Activated CD8-positive, alpha-beta T cell treated with anti-CD3 and anti-CD28 coated beads, Interleukin-2, amount 10 ng/mL, durations not matched to agents 7 days and 5 days (primary cell): ENCODE measurements at regions of chr12 and their contacts with region 1.

Region 1: DNA sequence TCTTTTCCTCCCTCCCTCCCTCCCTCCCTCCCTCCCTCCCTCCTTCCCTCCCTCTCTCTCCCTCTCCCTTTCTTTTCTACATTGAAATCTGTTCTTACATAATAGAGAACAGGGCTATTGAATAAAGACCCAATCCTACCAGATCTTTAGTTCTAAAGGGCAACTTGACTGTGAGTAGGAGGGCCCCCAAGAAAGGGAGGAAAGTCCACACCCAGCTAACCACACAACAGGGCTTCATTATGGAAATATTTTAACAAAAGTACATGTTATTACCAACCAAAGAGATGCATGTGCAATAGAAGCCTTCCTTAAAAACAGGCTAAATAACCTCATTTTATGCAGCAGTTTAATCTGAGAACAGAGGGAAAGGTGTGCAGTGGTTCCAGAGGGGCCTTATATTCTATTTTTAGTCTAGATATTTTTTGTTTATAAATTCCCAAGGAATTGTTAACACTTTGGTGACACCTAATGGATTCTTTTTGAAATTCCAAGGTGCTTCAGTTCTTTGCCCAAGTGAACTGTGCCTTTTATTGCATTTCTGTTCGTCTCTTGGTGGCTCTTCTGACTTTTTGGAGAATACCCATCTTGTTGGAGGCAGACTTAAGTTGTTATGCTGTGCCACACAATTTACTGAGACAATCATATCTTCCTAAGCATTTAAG is 63.0 kb downstream of the GNS start:
- DNase-seq: no peak
- ATAC-seq: no peak
- H3K4me3 Mint-ChIP-seq: no peak overlapping the region
- H3K27ac Mint-ChIP-seq: peak overlapping the region; percentile 36
- H3K4me1 Mint-ChIP-seq: peaks cover 64% of the 10 kb centered on the region
- H3K27me3 Mint-ChIP-seq: no peaks in the 10 kb centered on the region

Region 2: DNA sequence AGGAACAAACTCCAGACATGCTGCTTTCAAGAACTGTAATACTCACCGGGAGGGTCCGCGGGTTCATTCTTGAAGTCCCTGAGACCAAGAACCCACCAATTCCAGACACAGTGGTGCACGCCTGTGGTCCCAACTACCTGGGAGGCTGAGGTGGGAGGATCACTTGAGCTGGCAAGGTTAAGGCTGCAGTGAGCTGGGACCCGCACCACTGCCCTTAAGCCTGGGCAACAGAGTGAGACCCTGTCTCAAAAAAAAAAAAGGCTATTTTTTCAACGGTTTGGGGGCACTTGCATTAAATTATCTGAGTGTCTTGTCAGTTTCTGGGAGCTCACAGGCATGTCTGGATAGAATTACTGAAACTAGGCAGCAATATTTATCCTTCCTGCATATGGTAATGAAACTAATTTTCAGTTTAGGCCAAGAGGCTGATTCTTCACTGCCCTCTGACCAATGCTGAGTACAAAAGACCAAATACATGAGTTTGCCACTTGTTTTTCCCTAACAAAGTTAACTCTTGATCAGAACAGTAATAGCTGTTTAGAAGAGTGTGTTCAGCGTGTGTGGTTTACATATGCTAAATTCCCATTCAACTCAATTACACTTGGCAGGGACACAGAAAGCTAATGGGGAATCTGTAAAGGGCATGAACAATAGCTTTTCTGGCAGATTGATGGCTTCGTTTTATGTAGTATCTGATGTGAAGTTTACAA is 151.7 kb before region 1 on chr12:
- CTCF ChIA-PET with region 1: interaction called, 113 read pairs
- POLR2A ChIA-PET with region 1: interaction called, 9 read pairs
- DNase-seq: no peak
- ATAC-seq: no peak
- H3K4me3 Mint-ChIP-seq: no peak overlapping the region
- H3K27ac Mint-ChIP-seq: no peak overlapping the region
- H3K4me1 Mint-ChIP-seq: peaks cover 3% of the 10 kb centered on the region
- H3K27me3 Mint-ChIP-seq: peaks cover 2% of the 10 kb centered on the region

Region 3: GRCh38 chr12:64560396-64561304 is 135.6 kb before region 1 on chr12:
- CTCF ChIA-PET with region 1: interaction called, 12 read pairs
- POLR2A ChIA-PET with region 1: no interaction called
- DNase-seq: no peak
- ATAC-seq: no peak
- H3K4me3 Mint-ChIP-seq: no peak overlapping the region
- H3K27ac Mint-ChIP-seq: no peak overlapping the region
- H3K4me1 Mint-ChIP-seq: no peaks in the 10 kb centered on the region
- H3K27me3 Mint-ChIP-seq: no peaks in the 10 kb centered on the region

Region 4: DNA sequence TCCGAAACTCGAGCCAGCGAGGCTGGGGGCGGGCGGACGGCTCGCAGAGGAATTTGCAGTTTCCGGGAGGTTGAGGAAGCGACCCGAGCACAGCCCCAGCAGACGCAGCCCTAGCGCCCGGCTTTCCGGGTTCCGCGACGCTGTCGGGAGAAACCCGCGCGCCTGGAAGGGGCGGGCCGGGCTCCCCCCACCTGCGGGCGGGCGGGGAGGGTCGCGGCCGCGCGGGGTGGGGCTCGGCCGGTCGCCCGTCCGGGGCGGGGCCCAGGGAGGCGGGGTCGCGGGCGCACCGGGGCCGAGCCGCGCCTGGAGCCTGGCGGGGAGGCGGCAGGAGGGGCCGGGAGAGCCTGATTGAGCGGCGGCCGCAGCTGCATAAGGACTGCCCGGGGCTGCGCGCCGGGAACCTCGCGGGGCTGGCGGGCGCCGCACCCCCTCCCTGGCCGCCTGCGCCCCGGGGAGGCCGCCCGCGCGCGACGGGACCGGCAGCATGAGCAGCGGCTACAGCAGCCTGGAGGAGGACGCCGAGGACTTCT is 86.0 kb before region 1 on chr12 and contains the start of gene RASSF3:
- CTCF ChIA-PET with region 1: interaction called, 100 read pairs
- POLR2A ChIA-PET with region 1: interaction called, 5 read pairs
- DNase-seq: peak; percentile 84
- ATAC-seq: peak; percentile 71
- H3K4me3 Mint-ChIP-seq: peak within 1 kb of the TSS; percentile 99
- H3K27ac Mint-ChIP-seq: peak within 1 kb of the TSS; percentile 96
- H3K4me1 Mint-ChIP-seq: peaks cover 36% of the 10 kb centered on the region
- H3K27me3 Mint-ChIP-seq: no peaks in the 10 kb centered on the region
- total RNA-seq, gene RASSF3: 61.7 to 63.7 TPM

Region 5: GRCh38 chr12:64669270-64669842 is 26.9 kb before region 1 on chr12:
- CTCF ChIA-PET with region 1: interaction called, 41 read pairs
- POLR2A ChIA-PET with region 1: interaction called, 3 read pairs
- DNase-seq: peak; percentile 67
- ATAC-seq: peak; percentile 85
- H3K4me3 Mint-ChIP-seq: peak overlapping the region; percentile 87
- H3K27ac Mint-ChIP-seq: peak overlapping the region; percentile 98
- H3K4me1 Mint-ChIP-seq: peaks cover 91% of the 10 kb centered on the region
- H3K27me3 Mint-ChIP-seq: no peaks in the 10 kb centered on the region

Region 6: GRCh38 chr12:64679487-64679983 is 16.7 kb before region 1 on chr12:
- CTCF ChIA-PET with region 1: interaction called, 112 read pairs
- POLR2A ChIA-PET with region 1: interaction called, 3 read pairs
- DNase-seq: peak; percentile 69
- ATAC-seq: peak; percentile 74
- H3K4me3 Mint-ChIP-seq: peak overlapping the region; percentile 60
- H3K27ac Mint-ChIP-seq: peak overlapping the region; percentile 88
- H3K4me1 Mint-ChIP-seq: peaks cover 90% of the 10 kb centered on the region
- H3K27me3 Mint-ChIP-seq: no peaks in the 10 kb centered on the region

Region 7: GRCh38 chr12:64706306-64706705 is 10.1 kb after region 1 on chr12:
- CTCF ChIA-PET with region 1: interaction called, 21 read pairs
- POLR2A ChIA-PET with region 1: interaction called, 3 read pairs
- DNase-seq: no peak
- ATAC-seq: no peak
- H3K4me3 Mint-ChIP-seq: no peak overlapping the region
- H3K27ac Mint-ChIP-seq: no peak overlapping the region
- H3K4me1 Mint-ChIP-seq: peaks cover 6% of the 10 kb centered on the region
- H3K27me3 Mint-ChIP-seq: no peaks in the 10 kb centered on the region